ENCODE measurements at regions of chr10 and their contacts with region 1.

Region 1: DNA sequence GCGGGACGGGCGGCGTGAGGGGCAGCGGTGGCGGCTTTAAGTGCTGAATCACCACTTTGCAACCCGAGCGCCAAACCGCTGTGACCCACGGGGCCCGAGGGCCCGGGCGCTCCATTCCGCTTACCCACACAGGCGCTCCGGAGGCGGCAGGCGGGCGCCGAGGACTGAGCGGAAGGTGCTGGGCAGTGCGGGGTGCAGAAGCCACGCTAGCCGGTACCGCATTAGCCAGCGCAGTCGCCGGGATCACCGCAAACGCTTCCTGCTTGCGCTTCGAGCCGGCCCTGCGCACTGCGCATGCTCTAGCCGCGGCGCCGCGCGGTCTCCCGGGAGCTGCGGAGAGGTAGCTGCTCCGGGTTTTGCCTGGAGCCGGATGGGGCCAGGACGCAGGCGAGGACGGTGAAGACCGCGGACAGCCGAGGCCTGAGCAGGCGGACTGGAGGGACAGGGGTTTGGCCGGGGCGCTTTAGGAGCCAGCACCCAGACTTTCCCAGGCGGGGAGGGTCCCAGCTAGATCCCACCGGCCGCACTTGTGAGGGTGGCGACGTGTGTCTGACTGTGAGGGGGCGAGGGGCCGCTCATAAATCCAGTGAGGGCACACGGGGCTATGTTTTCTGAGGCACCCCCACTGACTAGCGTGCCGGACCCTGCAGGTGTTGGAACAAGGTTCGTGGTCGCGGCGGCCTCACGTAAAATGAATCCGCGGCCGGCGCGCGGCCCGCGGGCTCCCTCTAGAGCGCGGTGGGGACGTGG is at the start of gene IDE:
- DNase-seq: peak; percentile 58 to 84 (median 73)
- ATAC-seq: peak; percentile 79 to 80
- H3K4me3 Mint-ChIP-seq: peak within 1 kb of the TSS; percentile 66 to 93 (median 88)
- H3K27ac Mint-ChIP-seq: peak within 1 kb of the TSS; percentile 79 to 96 (median 92)
- H3K4me1 Mint-ChIP-seq: peaks cover 20 to 43% (median 41%) of the 10 kb centered on the region in 4 donors
- H3K27me3 Mint-ChIP-seq: no peaks in the 10 kb centered on the region
- polyA plus RNA-seq, gene IDE: 7.3 to 11.2 (median 9.5) TPM

Region 2: DNA sequence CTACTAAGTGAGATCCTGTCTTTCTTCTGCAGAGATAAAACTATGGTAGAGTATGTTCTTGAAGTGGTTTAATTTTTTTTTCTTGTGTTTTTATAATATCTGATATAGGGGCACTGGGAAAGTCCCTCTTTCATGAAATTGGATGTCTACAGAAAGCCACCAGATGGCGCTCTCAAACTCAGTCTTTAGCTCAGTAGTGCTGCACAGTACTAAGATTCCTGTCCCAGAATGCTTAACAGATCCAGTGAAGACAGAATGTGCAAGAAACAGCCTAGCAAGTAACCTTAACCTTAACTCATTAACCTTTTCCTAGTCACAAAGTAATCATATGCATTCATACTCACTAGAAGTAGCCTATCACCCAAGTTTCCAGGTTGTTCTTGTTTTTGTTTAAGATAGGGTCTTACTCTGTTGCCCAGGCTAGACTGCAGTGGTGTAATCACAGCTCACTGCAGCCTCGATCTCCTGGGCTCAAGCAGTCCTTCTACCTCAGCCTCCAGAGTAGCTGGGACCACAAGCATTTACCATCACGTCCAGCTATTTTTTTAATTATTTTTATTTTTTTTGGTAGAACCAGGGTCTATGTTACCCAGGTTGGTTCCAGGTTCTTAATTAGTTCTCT is 56.8 kb before region 1 on chr10:
- POLR2A ChIA-PET with region 1: interaction called, 16 read pairs
- DNase-seq: peak; percentile 45 to 82 (median 65)
- ATAC-seq: peak; percentile 97 to 99
- H3K4me3 Mint-ChIP-seq: no peak overlapping the region
- H3K27ac Mint-ChIP-seq: peak overlapping the region in 4 of 10 donors; percentile 2 to 48 (median 22)
- H3K4me1 Mint-ChIP-seq: peaks cover 1 to 7% (median 7%) of the 10 kb centered on the region in 4 donors
- H3K27me3 Mint-ChIP-seq: no peaks in the 10 kb centered on the region

Region 3: GRCh38 chr10:92552310-92552709 is 21.7 kb before region 1 on chr10:
- POLR2A ChIA-PET with region 1: no interaction called
- DNase-seq: no peak
- ATAC-seq: no peak
- H3K4me3 Mint-ChIP-seq: no peak overlapping the region
- H3K27ac Mint-ChIP-seq: no peak overlapping the region
- H3K4me1 Mint-ChIP-seq: peaks cover 0 to 6% (median 4%) of the 10 kb centered on the region in 4 donors
- H3K27me3 Mint-ChIP-seq: no peaks in the 10 kb centered on the region

Region 4: DNA sequence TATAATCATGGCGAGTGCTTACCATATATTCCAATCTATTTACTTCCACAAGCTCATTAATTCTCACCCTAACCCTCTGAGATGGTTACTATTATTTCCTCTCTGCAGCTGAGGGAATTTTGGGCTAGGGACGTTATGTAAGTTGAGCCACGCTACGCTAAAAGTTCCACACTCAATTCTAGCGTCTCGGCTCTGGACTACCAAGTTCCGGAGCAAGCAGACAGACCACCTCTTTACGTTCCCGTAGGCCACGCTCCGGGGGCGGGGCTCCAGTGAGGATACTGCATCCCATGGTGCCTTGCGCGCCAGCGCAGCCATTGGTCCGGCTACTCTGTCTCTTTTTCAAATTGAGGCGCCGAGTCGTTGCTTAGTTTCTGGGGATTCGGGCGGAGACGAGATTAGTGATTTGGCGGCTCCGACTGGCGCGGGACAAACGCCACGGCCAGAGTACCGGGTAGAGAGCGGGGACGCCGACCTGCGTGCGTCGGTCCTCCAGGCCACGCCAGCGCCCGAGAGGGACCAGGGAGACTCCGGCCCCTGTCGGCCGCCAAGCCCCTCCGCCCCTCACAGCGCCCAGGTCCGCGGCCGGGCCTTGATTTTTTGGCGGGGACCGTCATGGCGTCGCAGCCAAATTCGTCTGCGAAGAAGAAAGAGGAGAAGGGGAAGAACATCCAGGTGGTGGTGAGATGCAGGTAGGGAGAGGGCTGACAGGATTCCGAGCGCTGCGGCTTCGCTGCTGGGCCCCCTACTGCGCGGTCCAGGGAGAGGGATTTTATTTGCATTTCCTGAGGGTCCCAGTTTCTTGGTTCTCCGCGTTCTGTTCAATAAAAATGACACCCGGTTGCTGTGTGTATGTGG is 19.0 kb after region 1 on chr10 and contains the start of gene KIF11:
- POLR2A ChIA-PET with region 1: interaction called, 46 read pairs
- DNase-seq: peak; percentile 89 to 98 (median 94)
- ATAC-seq: peak; percentile 81 to 85
- H3K4me3 Mint-ChIP-seq: peak within 1 kb of the TSS; percentile 94 to 99 (median 98)
- H3K27ac Mint-ChIP-seq: peak within 1 kb of the TSS; percentile 97 to 100 (median 100)
- H3K4me1 Mint-ChIP-seq: peaks cover 16 to 42% (median 30%) of the 10 kb centered on the region in 4 donors
- H3K27me3 Mint-ChIP-seq: no peaks in the 10 kb centered on the region
- polyA plus RNA-seq, gene KIF11: 0.20 to 0.72 (median 0.42) TPM

Region 5: GRCh38 chr10:92604841-92605240 is 30.9 kb after region 1 on chr10:
- POLR2A ChIA-PET with region 1: no interaction called
- DNase-seq: no peak
- ATAC-seq: no peak
- H3K4me3 Mint-ChIP-seq: no peak overlapping the region
- H3K27ac Mint-ChIP-seq: peak overlapping the region in 1 of 10 donors; percentile 0
- H3K4me1 Mint-ChIP-seq: peaks cover 3 to 26% (median 6%) of the 10 kb centered on the region in 4 donors
- H3K27me3 Mint-ChIP-seq: no peaks in the 10 kb centered on the region

Measured in naive thymus-derived CD8-positive, alpha-beta T cell (primary cell).